ENCODE measurements at regions of chr13 and their contacts with region 1.

Region 1: DNA sequence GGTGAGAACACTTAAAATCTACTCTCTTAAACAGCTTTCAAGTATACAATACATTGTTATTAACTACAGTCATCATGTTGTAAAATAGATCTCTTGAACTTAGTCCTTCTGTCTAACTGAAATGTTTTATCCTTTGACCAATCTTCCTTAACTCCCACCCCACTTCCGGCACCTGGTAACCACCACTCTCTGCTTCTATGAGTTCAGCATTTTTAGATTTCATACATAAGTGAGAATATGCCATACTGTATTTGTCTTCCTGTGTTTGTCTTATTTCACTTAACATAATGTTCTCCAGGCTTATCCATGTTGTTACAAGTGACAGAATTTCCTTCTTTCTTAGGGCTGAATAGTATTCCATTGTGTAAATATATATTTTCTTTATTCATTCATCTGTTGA is 144.1 kb upstream of the TRPC4 start:
- DNase-seq: no peak
- H3K4me3 Mint-ChIP-seq: no peak overlapping the region
- H3K27ac Mint-ChIP-seq: no peak overlapping the region
- H3K4me1 Mint-ChIP-seq: no peaks in the 10 kb centered on the region
- H3K27me3 Mint-ChIP-seq: no peaks in the 10 kb centered on the region
- CTCF ChIP-seq: no peak

Region 2: GRCh38 chr13:38024431-38024830 is 10.8 kb after region 1 on chr13:
- CTCF ChIA-PET with region 1: no interaction called
- intact Hi-C with region 1: loop called (anchors 1 kb)
- DNase-seq: no peak
- H3K4me3 Mint-ChIP-seq: no peak overlapping the region
- H3K27ac Mint-ChIP-seq: no peak overlapping the region
- H3K4me1 Mint-ChIP-seq: no peaks in the 10 kb centered on the region
- H3K27me3 Mint-ChIP-seq: no peaks in the 10 kb centered on the region
- CTCF ChIP-seq: no peak

Measured in Calu3 (cell line).